CD4-positive, alpha-beta memory T cell (primary cell): ENCODE measurements at regions of chr5 and their contacts with region 1.

Region 1: GRCh38 chr5:73454351-73455036 is 5.9 kb upstream of the FOXD1 start:
- DNase-seq: peak in 3 of 5 donors; percentile 33 to 59 (median 44)
- H3K4me3 ChIP-seq: no peak overlapping the region
- H3K4me3 Mint-ChIP-seq: no peak overlapping the region
- H3K27ac ChIP-seq: no peak overlapping the region
- H3K27ac Mint-ChIP-seq: peak overlapping the region in 1 of 7 donors; percentile 53
- H3K4me1 ChIP-seq: peaks cover 5% of the 10 kb centered on the region
- H3K4me1 Mint-ChIP-seq: peaks cover 3 to 22% (median 6%) of the 10 kb centered on the region in 4 donors
- H3K27me3 ChIP-seq: peaks cover 42% of the 10 kb centered on the region
- H3K27me3 Mint-ChIP-seq: peaks cover 46 to 54% of the 10 kb centered on the region in 2 donors

Region 2: GRCh38 chr5:72673623-72674022 is 780.9 kb before region 1 on chr5:
- CTCF ChIA-PET with region 1: no interaction called
- POLR2A ChIA-PET with region 1: no interaction called
- intact Hi-C with region 1: no loop called
- DNase-seq: no peak
- H3K4me3 ChIP-seq: no peak overlapping the region
- H3K4me3 Mint-ChIP-seq: no peak overlapping the region
- H3K27ac ChIP-seq: no peak overlapping the region
- H3K27ac Mint-ChIP-seq: no peak overlapping the region
- H3K4me1 ChIP-seq: no peaks in the 10 kb centered on the region
- H3K4me1 Mint-ChIP-seq: no peaks in the 10 kb centered on the region
- H3K27me3 ChIP-seq: no peaks in the 10 kb centered on the region
- H3K27me3 Mint-ChIP-seq: peaks cover under 1% of the 10 kb centered on the region in 2 donors

Region 3: DNA sequence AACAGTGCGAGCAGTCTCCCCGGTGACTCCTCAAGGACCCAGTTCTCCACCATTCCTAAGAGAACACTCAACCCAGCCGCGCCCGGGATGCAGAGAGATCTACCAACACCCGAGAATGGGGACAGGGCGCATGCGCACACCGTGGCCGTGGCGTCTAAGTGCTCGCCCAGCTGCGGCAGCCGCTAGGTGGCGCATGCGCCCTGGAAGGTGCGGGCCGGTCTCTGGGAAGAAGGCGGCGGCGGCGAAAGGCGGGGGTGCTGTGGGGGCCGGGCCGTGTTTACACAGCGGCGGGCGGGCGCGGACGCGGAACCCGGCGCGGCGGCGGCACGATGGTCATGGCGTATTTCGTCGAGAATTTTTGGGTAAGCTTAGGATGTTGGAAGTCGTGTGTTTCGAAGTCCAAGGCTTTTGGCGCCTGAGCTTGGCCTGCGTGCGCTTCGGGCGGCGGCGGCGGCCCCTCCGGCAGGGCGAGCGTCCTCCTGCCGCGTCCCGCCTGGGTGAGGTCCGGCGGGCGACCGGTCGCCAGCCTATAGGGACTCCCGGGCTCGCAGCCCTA is 498.6 kb before region 1 on chr5 and contains the start of gene FCHO2:
- CTCF ChIA-PET with region 1: interaction called, 14 read pairs
- POLR2A ChIA-PET with region 1: no interaction called
- intact Hi-C with region 1: loop called (anchors 1 kb)
- DNase-seq: peak; percentile 92 to 95 (median 93)
- H3K4me3 ChIP-seq: peak within 1 kb of the TSS; percentile 85 to 96
- H3K4me3 Mint-ChIP-seq: peak within 1 kb of the TSS; percentile 90 to 99 (median 94)
- H3K27ac ChIP-seq: peak within 1 kb of the TSS; percentile 29
- H3K27ac Mint-ChIP-seq: peak within 1 kb of the TSS; percentile 85 to 91 (median 87)
- H3K4me1 ChIP-seq: peaks cover 15% of the 10 kb centered on the region
- H3K4me1 Mint-ChIP-seq: peaks cover 13 to 19% (median 13%) of the 10 kb centered on the region in 4 donors
- H3K27me3 ChIP-seq: no peaks in the 10 kb centered on the region
- H3K27me3 Mint-ChIP-seq: peaks cover 14 to 34% of the 10 kb centered on the region in 2 donors
- total RNA-seq, gene FCHO2: 6.1 to 6.3 TPM

Region 4: GRCh38 chr5:73215891-73216610 is 238.4 kb before region 1 on chr5:
- CTCF ChIA-PET with region 1: interaction called, 94 read pairs
- POLR2A ChIA-PET with region 1: interaction called, 7 read pairs
- intact Hi-C with region 1: no loop called
- DNase-seq: peak; percentile 53 to 59 (median 57)
- H3K4me3 ChIP-seq: peak overlapping the region in 1 of 2 donors; percentile 28
- H3K4me3 Mint-ChIP-seq: peak overlapping the region in 7 of 8 donors; percentile 19 to 69 (median 56)
- H3K27ac ChIP-seq: no peak overlapping the region
- H3K27ac Mint-ChIP-seq: no peak overlapping the region
- H3K4me1 ChIP-seq: peaks cover 11% of the 10 kb centered on the region
- H3K4me1 Mint-ChIP-seq: peaks cover 6 to 10% (median 7%) of the 10 kb centered on the region in 4 donors
- H3K27me3 ChIP-seq: peaks cover 28% of the 10 kb centered on the region
- H3K27me3 Mint-ChIP-seq: peaks cover 47 to 50% of the 10 kb centered on the region in 2 donors

Region 5: DNA sequence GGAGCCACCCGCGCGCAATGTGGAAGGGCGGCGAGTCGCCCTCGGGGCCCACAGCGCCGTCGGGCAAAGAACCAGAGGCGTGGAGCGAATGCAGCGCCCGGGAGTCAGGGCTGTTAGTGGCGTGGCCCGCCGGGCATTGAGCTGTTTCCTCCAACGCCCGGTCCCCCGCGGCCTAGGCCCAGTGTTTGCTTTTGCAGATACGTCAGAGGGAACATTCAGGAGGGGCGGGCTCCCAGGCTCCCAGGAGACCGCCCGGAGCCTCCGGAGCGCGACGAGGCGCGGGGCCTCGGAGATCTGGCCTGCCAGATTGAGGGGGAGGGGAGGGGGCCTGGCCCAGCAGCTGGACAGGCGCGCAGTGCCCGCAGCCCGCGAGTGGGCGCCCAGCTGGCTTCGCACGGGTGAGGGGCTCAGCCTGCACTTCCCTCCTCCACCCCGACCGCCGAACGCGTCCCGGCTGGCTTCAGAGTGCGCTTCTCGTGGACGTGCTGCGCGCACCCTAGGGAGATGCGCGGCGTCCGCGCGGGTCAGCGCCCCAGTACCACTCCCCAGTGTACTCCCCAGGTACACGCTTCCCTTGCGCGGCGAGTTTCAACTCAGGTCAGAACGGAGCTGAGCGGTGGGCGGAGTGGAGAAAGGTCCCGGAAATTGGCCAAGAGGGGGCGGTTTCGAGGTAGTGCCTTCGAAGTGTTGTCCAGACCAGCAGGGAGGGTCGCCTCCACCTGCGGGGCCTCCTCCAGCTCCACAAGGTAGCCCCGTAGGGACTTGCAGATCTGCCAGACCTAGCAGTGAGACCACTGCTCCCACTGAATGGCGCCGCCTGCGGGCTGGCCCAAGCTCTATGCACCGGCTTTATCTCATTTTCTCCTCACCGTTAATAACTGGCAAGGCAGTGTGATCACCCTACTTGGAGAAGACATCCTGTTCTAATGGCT is 151.1 kb before region 1 on chr5:
- CTCF ChIA-PET with region 1: interaction called, 10 read pairs
- POLR2A ChIA-PET with region 1: no interaction called
- intact Hi-C with region 1: no loop called
- DNase-seq: no peak
- H3K4me3 ChIP-seq: no peak overlapping the region
- H3K4me3 Mint-ChIP-seq: peak overlapping the region in 2 of 8 donors; percentile 60 to 65
- H3K27ac ChIP-seq: no peak overlapping the region
- H3K27ac Mint-ChIP-seq: peak overlapping the region in 1 of 7 donors; percentile 95
- H3K4me1 ChIP-seq: peaks cover 15% of the 10 kb centered on the region
- H3K4me1 Mint-ChIP-seq: peaks cover 12 to 28% (median 16%) of the 10 kb centered on the region in 4 donors
- H3K27me3 ChIP-seq: peaks cover 54% of the 10 kb centered on the region
- H3K27me3 Mint-ChIP-seq: peaks cover 76 to 83% of the 10 kb centered on the region in 2 donors

Region 6: DNA sequence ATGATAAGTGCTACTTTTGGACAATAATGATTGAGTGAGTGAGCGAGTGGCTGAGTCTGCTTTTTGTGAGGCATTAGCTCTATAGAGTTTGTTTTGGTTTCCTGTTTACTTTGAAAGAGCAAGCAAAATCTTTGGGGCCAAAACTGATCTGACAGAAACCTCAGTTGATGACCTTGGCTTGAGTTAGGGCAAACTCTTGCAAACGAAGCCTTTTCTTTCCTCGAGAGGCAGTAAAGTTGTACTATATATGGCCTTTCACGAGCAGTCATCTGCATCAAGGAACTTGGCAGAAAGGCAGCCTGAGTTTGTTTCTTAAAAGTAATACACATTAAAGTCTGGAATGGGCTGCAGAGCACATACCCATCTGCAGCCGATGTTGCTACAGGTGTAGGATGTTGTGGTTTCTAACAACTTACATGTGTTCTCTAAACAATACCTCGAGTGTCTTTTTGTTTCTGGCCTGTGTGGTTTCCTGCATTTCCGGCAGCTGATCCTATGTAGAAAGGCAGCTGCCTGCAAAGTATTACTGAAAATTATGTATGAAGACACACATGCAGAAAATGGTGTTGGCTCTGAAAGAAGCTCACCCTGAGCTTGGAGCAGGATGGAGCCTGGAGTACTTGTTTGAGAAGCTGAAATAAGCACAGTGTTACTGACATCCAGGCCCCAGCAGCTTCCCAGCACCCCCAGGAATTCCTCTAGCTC is 66.7 kb before region 1 on chr5:
- CTCF ChIA-PET with region 1: interaction called, 6 read pairs
- POLR2A ChIA-PET with region 1: interaction called, 14 read pairs
- intact Hi-C with region 1: loop called (anchors 1 kb)
- DNase-seq: peak; percentile 80 to 85 (median 82)
- H3K4me3 ChIP-seq: peak overlapping the region; percentile 3 to 17
- H3K4me3 Mint-ChIP-seq: peak overlapping the region; percentile 56 to 81 (median 71)
- H3K27ac ChIP-seq: no peak overlapping the region
- H3K27ac Mint-ChIP-seq: peak overlapping the region in 6 of 7 donors; percentile 17 to 79 (median 49)
- H3K4me1 ChIP-seq: peaks cover 34% of the 10 kb centered on the region
- H3K4me1 Mint-ChIP-seq: peaks cover 20 to 45% (median 34%) of the 10 kb centered on the region in 4 donors
- H3K27me3 ChIP-seq: peaks cover 9% of the 10 kb centered on the region
- H3K27me3 Mint-ChIP-seq: peaks cover 6 to 10% of the 10 kb centered on the region in 2 donors

Region 7: GRCh38 chr5:73483676-73484075 is 29.2 kb after region 1 on chr5:
- CTCF ChIA-PET with region 1: no interaction called
- POLR2A ChIA-PET with region 1: no interaction called
- intact Hi-C with region 1: no loop called
- DNase-seq: no peak
- H3K4me3 ChIP-seq: no peak overlapping the region
- H3K4me3 Mint-ChIP-seq: no peak overlapping the region
- H3K27ac ChIP-seq: no peak overlapping the region
- H3K27ac Mint-ChIP-seq: no peak overlapping the region
- H3K4me1 ChIP-seq: no peaks in the 10 kb centered on the region
- H3K4me1 Mint-ChIP-seq: no peaks in the 10 kb centered on the region
- H3K27me3 ChIP-seq: no peaks in the 10 kb centered on the region
- H3K27me3 Mint-ChIP-seq: peaks cover 8 to 18% of the 10 kb centered on the region in 2 donors

Region 8: DNA sequence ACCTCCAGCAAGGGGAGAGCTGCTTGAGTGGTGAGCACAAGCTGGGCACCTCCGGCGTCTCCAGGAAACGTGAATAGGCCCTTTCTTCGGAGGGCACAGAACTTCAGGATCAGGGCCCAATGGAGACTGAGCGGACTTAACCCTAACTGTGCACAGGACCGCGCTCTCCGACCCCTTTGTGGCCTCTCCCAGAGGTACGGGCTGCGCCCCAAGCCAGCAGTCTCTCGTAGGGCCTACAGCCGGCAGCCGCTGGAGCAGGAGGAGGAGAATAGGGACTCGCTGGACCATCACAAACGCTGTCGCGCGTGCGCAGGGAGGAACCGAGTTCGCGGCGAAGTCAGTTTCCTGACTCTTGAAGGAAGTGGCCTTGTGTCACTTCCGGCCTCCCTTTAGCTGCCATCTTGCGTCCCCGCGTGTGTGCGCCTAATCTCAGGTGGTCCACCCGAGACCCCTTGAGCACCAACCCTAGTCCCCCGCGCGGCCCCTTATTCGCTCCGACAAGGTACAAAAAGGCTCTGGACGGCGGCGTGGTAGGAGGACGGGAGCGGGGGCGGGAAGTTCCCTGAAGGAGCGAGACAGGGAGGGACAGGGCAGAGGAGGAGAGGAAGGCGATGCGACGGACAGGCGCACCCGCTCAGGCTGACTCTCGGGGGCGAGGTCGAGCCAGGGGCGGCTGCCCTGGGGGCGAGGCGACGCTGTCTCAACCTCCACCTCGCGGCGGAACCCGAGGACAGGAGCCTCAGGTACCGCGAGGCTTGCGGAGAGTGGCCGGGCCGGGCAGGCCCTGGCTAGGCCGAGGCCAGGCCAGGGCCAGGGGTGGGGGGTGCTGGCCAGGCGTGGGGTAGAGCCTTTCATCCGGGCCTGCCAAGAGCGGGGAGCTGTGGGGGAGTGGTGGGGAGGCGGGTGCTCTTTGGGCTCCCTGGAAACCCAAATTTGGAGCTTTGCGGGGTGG is 43.8 kb after region 1 on chr5 and contains the start of gene BTF3:
- CTCF ChIA-PET with region 1: interaction called, 9 read pairs
- POLR2A ChIA-PET with region 1: interaction called, 3 read pairs
- intact Hi-C with region 1: loop called (anchors 1 kb)
- DNase-seq: peak; percentile 90 to 96 (median 92)
- H3K4me3 ChIP-seq: peak within 1 kb of the TSS; percentile 77 to 91
- H3K4me3 Mint-ChIP-seq: peak within 1 kb of the TSS; percentile 95 to 99 (median 98)
- H3K27ac ChIP-seq: peak within 1 kb of the TSS; percentile 97
- H3K27ac Mint-ChIP-seq: peak within 1 kb of the TSS; percentile 99 to 100 (median 99)
- H3K4me1 ChIP-seq: peaks cover 38% of the 10 kb centered on the region
- H3K4me1 Mint-ChIP-seq: peaks cover 30 to 49% (median 36%) of the 10 kb centered on the region in 4 donors
- H3K27me3 ChIP-seq: no peaks in the 10 kb centered on the region
- H3K27me3 Mint-ChIP-seq: peaks cover 5 to 7% of the 10 kb centered on the region in 2 donors
- total RNA-seq, gene BTF3: 538 to 557 TPM

Region 9: GRCh38 chr5:73519531-73520283 is 65.2 kb after region 1 on chr5:
- CTCF ChIA-PET with region 1: no interaction called
- POLR2A ChIA-PET with region 1: no interaction called
- intact Hi-C with region 1: no loop called
- DNase-seq: peak; percentile 75 to 80 (median 77)
- H3K4me3 ChIP-seq: no peak overlapping the region
- H3K4me3 Mint-ChIP-seq: peak overlapping the region in 7 of 8 donors; percentile 29 to 78 (median 52)
- H3K27ac ChIP-seq: no peak overlapping the region
- H3K27ac Mint-ChIP-seq: peak overlapping the region in 5 of 7 donors; percentile 24 to 91 (median 47)
- H3K4me1 ChIP-seq: peaks cover 8% of the 10 kb centered on the region
- H3K4me1 Mint-ChIP-seq: peaks cover 2 to 9% (median 7%) of the 10 kb centered on the region in 4 donors
- H3K27me3 ChIP-seq: no peaks in the 10 kb centered on the region
- H3K27me3 Mint-ChIP-seq: no peaks in the 10 kb centered on the region

Region 10: GRCh38 chr5:75236322-75237316 is 1782.1 kb after region 1 on chr5 and contains the start of gene ANKRD31:
- CTCF ChIA-PET with region 1: no interaction called
- POLR2A ChIA-PET with region 1: no interaction called
- intact Hi-C with region 1: no loop called
- DNase-seq: peak; percentile 85 to 92 (median 91)
- H3K4me3 ChIP-seq: peak within 1 kb of the TSS; percentile 63 to 84
- H3K4me3 Mint-ChIP-seq: peak within 1 kb of the TSS; percentile 91 to 95 (median 94)
- H3K27ac ChIP-seq: peak within 1 kb of the TSS; percentile 69
- H3K27ac Mint-ChIP-seq: peak within 1 kb of the TSS; percentile 87 to 98 (median 98)
- H3K4me1 ChIP-seq: peaks cover 14% of the 10 kb centered on the region
- H3K4me1 Mint-ChIP-seq: peaks cover 8 to 16% (median 11%) of the 10 kb centered on the region in 4 donors
- H3K27me3 ChIP-seq: no peaks in the 10 kb centered on the region
- H3K27me3 Mint-ChIP-seq: no peaks in the 10 kb centered on the region
- total RNA-seq, gene ANKRD31: 0.73 to 0.86 TPM